ENCODE measurements at regions of chr14 and their contacts with region 1.

Region 1: GRCh38 chr14:87805315-87805723 is 187.7 kb downstream of the GALC start:
- DNase-seq: peak; percentile 53

Region 2: DNA sequence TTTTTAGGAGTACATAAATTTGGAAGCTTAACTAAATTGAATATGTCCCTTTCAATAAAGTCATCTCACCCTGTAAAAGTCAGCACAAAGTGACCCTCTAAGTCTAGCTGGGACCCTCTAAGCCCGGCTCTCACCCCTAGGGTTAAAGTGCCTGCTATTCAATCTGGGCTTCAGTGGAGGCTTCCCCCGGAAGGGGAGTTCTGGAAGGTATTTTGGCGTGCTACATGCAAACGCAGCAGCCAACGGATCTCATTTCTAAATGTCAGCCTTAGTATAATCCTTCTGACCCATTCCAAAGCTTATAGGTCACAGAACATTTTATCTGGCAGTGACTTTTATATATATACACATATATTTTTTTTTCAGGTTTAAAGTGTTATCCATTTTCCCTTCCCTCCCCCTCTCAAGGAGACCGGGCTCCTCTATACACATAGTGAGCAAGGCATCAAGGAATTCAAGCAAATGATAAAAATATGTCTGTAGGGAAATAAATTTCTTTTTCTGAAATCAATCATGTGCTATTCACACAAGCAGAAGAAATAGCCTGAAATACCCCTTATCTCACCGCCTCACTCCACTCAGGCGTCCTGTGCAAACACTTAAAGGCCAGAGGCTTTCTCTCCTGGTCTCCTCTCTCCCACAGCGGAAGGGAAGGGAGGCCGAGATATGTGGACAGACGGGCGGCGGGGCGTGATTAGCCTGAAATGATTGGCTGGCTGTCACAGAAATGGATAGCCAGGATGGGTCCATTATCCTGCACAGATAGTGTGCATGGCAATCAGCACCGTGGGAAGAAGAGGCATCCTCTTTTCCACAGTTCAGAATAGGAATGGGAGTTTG is 114.1 kb before region 1 on chr14:
- CTCF ChIA-PET with region 1: no interaction called
- POLR2A ChIA-PET with region 1: no interaction called
- DNase-seq: no peak

Region 3: DNA sequence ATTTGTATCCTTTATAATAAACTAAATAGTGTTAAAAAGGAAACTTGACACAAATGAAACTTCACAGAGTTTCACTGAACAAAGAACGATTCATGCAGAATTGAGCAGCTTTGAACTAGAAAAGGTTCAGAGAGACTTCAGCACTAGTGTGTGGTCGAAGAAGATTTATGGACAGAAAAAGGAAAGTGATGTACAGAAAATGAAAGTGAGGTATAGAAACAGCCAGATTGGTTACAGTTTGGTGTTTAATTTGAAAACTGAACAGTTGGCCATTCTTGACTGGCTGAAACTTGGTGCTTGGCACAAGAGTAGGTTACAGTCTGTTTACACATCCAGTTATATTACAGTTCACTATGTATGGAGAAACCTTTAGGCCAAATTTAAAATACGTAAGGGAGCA is 19.4 kb before region 1 on chr14:
- CTCF ChIA-PET with region 1: no interaction called
- POLR2A ChIA-PET with region 1: no interaction called
- DNase-seq: no peak

Region 4: DNA sequence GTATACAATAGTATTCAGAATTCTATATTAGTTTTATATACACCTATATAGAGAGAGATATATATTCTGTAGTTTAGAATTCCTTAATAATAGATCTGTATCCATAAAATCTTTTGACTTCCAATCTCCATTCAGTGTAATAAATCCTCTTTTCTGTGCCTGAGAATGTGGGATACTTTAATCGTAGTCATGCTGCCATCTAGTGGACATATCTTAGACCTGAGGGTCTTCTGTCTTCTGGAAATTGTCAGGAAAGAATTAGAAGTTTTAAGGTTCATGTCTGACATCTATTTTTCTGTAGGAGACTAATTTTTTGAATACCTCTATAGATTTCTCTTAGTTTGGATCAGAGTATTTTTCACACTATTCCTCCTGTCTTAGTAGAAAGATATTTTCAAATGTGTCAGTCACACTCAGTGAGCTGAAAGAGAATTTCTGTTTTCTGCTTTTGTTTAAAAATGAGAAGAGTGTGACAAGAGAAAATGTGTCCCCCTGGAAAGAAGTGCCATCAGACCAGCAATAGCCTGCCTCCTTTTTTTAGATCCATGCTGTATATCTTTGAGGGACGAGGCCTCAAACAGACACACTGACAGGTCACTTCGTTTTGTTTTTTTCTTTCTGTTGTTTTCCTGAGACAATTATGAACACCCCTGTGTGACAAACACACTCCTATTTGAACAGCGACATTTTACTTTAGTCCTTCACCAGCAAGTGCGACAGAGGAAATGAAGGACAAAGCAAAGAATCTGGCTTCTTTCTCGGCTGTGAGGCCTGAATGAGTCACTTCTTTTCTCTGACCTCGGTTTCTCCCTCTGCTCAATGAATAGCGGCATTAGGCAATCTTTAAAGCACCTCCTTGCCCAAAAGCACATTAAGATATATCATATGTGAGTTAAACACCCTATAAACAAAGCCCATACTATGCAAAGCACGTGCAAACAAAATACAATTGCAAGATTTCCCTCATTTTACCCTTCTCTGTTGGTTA is 91.4 kb after region 1 on chr14:
- CTCF ChIA-PET with region 1: interaction called, 19 read pairs
- POLR2A ChIA-PET with region 1: no interaction called
- DNase-seq: peak; percentile 36

Region 5: DNA sequence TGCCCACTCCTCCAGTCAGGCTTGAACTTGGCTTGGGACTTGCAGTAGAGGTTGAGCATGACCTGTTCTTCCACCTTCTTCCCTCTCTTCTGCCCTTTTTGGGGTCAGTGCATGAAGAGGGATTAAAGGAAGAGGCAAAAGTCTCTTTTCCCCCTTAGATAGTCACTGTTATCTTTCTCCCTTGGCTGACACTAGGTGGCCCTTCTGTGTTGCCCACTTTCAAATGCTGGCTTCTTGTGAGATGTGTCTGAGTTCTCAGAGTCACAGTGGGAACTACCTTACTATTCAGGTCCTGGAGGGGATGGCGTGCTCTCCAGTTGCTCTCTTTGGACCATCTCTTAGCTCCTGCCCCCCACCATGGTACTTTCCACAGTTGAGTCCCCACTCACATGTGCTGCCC is 273.2 kb after region 1 on chr14:
- CTCF ChIA-PET with region 1: no interaction called
- POLR2A ChIA-PET with region 1: no interaction called
- DNase-seq: no peak